GM18951 (cell line): ENCODE measurements at regions of chr15 and their contacts with region 1.

Region 1: GRCh38 chr15:73700041-73700842 is 16.1 kb downstream of the CD276 start:
- POLR2A ChIP-seq: no peak

Region 2: GRCh38 chr15:73284090-73284716 is 416.0 kb before region 1 on chr15:
- in situ Hi-C with region 1: loop called (anchors 25 kb)
- POLR2A ChIP-seq: no peak

Region 3: GRCh38 chr15:74709011-74709410 is 1008.8 kb after region 1 on chr15:
- in situ Hi-C with region 1: no loop called
- POLR2A ChIP-seq: no peak